ENCODE measurements at regions of chr2 and their contacts with region 1.

Region 1: DNA sequence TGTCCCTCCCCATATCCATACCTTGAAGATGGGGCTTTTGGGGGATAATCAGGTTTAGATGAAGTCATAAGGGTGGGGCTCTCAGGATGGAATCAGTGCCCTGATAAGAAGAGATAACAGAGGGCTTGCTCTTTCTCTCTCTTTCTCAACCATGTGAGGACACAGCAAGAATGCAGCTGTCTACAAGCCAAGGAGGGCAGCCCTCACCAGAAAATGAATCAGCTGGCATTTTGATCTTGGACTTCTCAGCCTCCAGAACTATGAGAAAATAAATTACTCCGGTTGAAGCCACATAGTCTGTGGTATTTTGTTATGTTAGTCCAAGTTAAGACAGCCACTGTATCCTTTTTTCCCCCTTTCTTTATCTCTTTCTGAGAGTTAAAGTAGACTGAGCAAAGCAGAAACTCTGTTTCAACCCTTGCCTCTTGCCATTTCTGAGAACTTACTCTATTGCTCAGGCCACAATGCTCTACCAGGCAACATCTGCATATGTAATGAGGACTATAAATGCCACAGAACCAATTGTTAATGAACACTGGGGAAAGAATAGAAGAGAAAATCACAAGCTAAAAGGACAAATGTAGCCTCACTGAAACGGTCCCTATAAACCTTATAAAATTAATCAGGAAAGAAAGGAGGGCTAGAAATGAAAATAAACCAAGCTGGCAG is 56.9 kb downstream of the SRBD1 start:
- DNase-seq: no peak
- H3K4me3 Mint-ChIP-seq: peak overlapping the region; percentile 9
- H3K27ac Mint-ChIP-seq: peak overlapping the region; percentile 89
- H3K4me1 Mint-ChIP-seq: peaks cover 36% of the 10 kb centered on the region
- H3K27me3 Mint-ChIP-seq: no peaks in the 10 kb centered on the region

Region 2: GRCh38 chr2:44793322-44793870 is 760.8 kb before region 1 on chr2:
- intact Hi-C with region 1: no loop called
- DNase-seq: no peak
- H3K4me3 Mint-ChIP-seq: no peak overlapping the region
- H3K27ac Mint-ChIP-seq: no peak overlapping the region
- H3K4me1 Mint-ChIP-seq: no peaks in the 10 kb centered on the region
- H3K27me3 Mint-ChIP-seq: peaks cover 32% of the 10 kb centered on the region

Region 3: DNA sequence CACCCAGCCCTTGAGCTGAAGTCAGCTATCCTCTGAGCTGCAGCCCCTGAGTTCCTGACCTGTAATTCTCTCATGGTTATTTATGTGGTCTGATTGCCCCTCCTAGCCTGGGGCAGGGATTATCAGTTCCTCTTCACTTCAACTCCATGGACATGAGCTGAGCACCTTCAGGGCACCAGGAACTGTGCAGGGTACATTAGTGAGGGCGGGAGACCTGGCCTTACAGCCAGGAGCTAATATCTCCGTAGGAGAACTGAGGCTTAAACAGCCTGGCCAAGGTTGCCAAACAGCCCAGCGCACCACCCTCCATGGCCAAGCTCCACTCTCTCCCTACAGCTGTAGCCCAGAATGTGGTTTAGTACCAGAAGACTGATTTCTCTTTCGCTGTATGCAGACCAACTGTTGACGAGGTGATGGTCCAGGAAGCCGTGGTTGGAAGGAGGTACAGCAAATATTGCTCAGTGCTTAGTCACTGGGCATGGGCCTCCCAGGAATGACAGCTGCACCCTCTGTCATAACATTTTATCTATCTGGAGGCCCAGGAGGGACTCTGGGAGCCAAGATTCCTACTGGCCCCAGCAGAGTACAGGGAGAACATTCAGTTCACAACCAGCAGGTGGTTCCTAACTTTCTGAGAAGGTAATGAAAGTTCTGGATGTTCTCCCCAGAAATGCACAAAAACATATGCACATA is 316.2 kb before region 1 on chr2:
- intact Hi-C with region 1: no loop called
- DNase-seq: no peak
- H3K4me3 Mint-ChIP-seq: no peak overlapping the region
- H3K27ac Mint-ChIP-seq: no peak overlapping the region
- H3K4me1 Mint-ChIP-seq: peaks cover 7% of the 10 kb centered on the region
- H3K27me3 Mint-ChIP-seq: peaks cover 21% of the 10 kb centered on the region

Region 4: DNA sequence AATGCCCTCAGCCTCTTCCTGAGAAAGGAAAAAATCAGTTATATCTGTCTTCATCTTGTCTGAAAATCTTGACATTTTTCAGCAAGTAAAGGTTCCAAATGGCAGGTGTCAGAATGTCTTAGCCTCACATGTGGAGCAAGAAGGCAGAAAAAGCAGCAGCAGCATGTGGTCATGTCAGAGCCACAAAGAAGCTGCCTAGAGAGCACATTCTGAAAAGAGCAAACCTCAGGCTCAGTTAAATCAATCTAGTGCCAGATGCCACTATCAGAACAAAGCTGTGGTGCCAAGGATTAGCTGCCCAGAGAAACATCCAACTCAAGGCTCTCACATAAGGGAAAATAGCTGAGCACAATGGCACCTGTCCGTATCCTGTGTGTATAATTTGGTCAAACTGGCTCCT is 49.1 kb before region 1 on chr2:
- intact Hi-C with region 1: no loop called
- DNase-seq: no peak
- H3K4me3 Mint-ChIP-seq: no peak overlapping the region
- H3K27ac Mint-ChIP-seq: no peak overlapping the region
- H3K4me1 Mint-ChIP-seq: peaks cover 11% of the 10 kb centered on the region
- H3K27me3 Mint-ChIP-seq: no peaks in the 10 kb centered on the region

Region 5: DNA sequence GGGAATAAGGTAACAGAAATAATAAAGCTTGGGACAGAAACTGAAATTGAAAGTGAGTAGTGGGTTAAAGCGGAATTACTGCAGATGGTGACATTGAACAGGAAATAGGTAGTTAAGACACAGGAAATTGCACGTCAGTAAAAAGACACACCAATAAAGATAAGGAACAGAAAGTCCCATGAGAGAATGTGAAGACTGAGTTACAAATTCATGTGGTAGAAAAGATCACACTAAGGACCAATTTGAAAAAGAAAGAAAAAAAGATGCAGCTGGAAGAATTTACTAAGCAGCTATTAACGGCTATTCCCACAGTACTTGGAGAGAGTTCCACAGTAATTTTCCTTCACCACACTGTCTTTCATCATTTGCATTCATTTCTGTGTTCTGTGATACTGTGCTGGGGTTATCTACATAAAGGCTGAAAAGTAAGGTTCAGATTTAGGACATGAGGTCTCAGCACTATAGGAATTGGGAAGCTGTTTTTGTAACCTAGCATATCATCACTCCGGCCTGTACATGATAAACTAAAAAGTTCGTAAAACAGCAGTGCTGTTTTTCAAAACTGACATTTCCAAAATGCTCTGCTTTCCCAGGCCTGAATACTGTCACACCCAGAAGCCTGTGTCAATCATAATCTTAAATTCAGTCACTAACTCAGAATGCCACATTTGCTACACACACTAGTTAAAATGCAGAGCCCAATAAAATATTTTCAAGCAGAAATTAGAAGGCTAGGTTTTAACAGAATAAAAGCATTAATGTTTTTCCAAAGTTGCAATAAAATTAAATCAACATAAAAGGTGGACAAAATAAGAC is 14.0 kb after region 1 on chr2:
- intact Hi-C with region 1: loop called (anchors 1 kb)
- DNase-seq: no peak
- H3K4me3 Mint-ChIP-seq: peak overlapping the region; percentile 64
- H3K27ac Mint-ChIP-seq: peak overlapping the region; percentile 92
- H3K4me1 Mint-ChIP-seq: peaks cover 36% of the 10 kb centered on the region
- H3K27me3 Mint-ChIP-seq: no peaks in the 10 kb centered on the region

Region 6: GRCh38 chr2:45843136-45843535 is 288.9 kb after region 1 on chr2:
- intact Hi-C with region 1: no loop called
- DNase-seq: no peak
- H3K4me3 Mint-ChIP-seq: peak overlapping the region; percentile 24
- H3K27ac Mint-ChIP-seq: peak overlapping the region; percentile 67
- H3K4me1 Mint-ChIP-seq: peaks cover 62% of the 10 kb centered on the region
- H3K27me3 Mint-ChIP-seq: no peaks in the 10 kb centered on the region

Measured in activated T-helper 2 cell treated with anti-CD3 and anti-CD28 coated beads, Interferon-gamma antibody, Interleukin-2, Interleukin-4, amounts not matched to agents 10 μg/mL and 5 μg/mL and 100 μg/mL, durations not matched to agents 14 hours and 24 hours and 36 hours (primary cell).